OCI-LY7 (cell line): ENCODE measurements at regions of chr17 and their contacts with region 1.

Region 1: GRCh38 chr17:3723556-3724369 is at the start of gene HASPIN:
- DNase-seq: peak; percentile 98
- H3K4me3 ChIP-seq: peak within 1 kb of the TSS; percentile 97
- H3K27ac ChIP-seq: peak within 1 kb of the TSS; percentile 70
- H3K4me1 ChIP-seq: peaks cover 66% of the 10 kb centered on the region
- CTCF ChIP-seq: 0 out of 2 replicates have a peak, but pooled peaks have one; percentile 0
- total RNA-seq, gene HASPIN: 60.8 and 88.6 TPM in 2 replicates

Region 2: DNA sequence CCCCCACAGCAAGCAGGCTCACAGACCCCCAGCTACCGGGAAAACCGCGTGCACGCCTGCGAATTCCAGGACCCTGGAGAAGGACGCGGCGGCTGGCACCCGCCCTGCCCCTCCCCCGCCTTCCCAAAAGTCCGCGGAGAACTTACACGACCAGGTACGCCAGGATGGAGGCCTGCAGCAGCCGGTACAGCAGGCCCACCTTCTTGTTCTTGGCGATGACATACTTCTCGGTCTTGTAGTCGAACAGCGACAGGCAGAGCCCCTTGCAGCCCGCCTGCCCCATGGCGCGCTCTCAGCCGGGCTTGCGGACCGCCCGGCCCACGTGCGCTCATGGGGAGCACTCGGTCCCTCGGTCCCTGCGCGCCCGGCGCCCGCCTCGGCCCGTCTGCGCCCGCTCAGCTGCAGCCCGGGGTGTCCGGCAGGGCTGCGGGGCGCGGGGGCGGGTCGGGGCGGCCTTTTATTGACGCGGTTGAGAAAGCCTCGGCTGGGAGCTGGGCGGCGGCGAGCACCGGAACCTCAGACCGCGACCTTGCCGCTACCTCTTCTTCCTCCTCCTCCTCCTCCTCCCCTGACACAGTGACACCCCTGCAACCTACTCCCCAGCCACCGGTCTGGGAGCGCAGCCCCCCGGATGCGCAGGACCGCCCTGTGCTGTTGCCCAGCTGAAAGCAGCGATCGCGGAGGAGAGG is 27.9 kb before region 1 on chr17 and contains the start of gene P2RX5:
- CTCF ChIA-PET with region 1: no interaction called
- POLR2A ChIA-PET with region 1: interaction called, 22 read pairs
- intact Hi-C with region 1: loop called (anchors 1 kb)
- DNase-seq: peak; percentile 87
- H3K4me3 ChIP-seq: peak within 1 kb of the TSS; percentile 79
- H3K27ac ChIP-seq: peak within 1 kb of the TSS; percentile 87
- H3K4me1 ChIP-seq: peaks cover 38% of the 10 kb centered on the region
- CTCF ChIP-seq: no peak
- total RNA-seq, gene P2RX5: 143 and 150 TPM in 2 replicates

Region 3: GRCh38 chr17:3710951-3711383 is 12.8 kb before region 1 on chr17:
- CTCF ChIA-PET with region 1: no interaction called
- POLR2A ChIA-PET with region 1: interaction called, 12 read pairs
- intact Hi-C with region 1: loop called (anchors 1 kb)
- DNase-seq: peak; percentile 96
- H3K4me3 ChIP-seq: peak overlapping the region; percentile 52
- H3K27ac ChIP-seq: peak overlapping the region; percentile 96
- H3K4me1 ChIP-seq: peaks cover 70% of the 10 kb centered on the region
- CTCF ChIP-seq: no peak